B cell (primary cell): ENCODE measurements at regions of chr12 and their contacts with region 1.

Region 1: GRCh38 chr12:89470741-89471509 is 53.7 kb downstream of the GALNT4 start:
- DNase-seq: peak; percentile 70
- ATAC-seq: peak; percentile 61
- H3K4me3 ChIP-seq: no peak overlapping the region
- H3K4me3 Mint-ChIP-seq: no peak overlapping the region
- H3K27ac ChIP-seq: no peak overlapping the region
- H3K27ac Mint-ChIP-seq: peak overlapping the region; percentile 63
- H3K4me1 ChIP-seq: peaks cover 22 to 32% of the 10 kb centered on the region in 2 donors
- H3K4me1 Mint-ChIP-seq: peaks cover 47% of the 10 kb centered on the region
- H3K27me3 ChIP-seq: no peaks in the 10 kb centered on the region
- H3K27me3 Mint-ChIP-seq: no peaks in the 10 kb centered on the region
- CTCF ChIP-seq: peak; percentile 82

Region 2: GRCh38 chr12:89352492-89353187 is 118.3 kb before region 1 on chr12 and contains the start of gene DUSP6:
- CTCF ChIA-PET with region 1: no interaction called
- POLR2A ChIA-PET with region 1: no interaction called
- intact Hi-C with region 1: loop called (anchors 5 kb)
- DNase-seq: peak; percentile 88
- ATAC-seq: peak; percentile 64
- H3K4me3 ChIP-seq: peak within 1 kb of the TSS; percentile 63 to 94 (median 78)
- H3K4me3 Mint-ChIP-seq: peak within 1 kb of the TSS; percentile 97
- H3K27ac ChIP-seq: peak within 1 kb of the TSS; percentile 82 to 87
- H3K27ac Mint-ChIP-seq: peak within 1 kb of the TSS; percentile 96
- H3K4me1 ChIP-seq: peaks cover 44 to 52% of the 10 kb centered on the region in 2 donors
- H3K4me1 Mint-ChIP-seq: peaks cover 68% of the 10 kb centered on the region
- H3K27me3 ChIP-seq: no peaks in the 10 kb centered on the region
- H3K27me3 Mint-ChIP-seq: no peaks in the 10 kb centered on the region
- CTCF ChIP-seq: no peak
- total RNA-seq, gene DUSP6: 1.6 and 3.2 TPM in 2 replicates

Region 3: DNA sequence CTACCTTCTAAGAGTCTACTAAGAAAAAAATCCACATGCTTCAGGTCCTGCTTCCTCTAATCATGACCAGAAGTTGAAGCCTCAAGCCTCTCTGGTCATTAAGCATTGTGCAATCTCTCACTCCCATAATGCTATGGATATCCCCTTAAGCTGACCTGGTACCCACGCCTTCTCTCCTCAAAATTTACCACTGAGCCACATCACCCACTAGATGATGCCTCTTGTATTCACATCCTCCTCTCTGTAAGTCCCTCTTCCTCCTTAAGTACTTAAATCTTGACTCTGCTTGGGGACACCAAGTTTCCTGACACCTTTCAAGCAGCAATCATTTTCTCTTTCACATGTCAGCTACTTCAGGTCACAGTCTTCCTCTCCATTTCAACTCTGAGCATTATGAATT is 43.8 kb after region 1 on chr12:
- CTCF ChIA-PET with region 1: interaction called, 10 read pairs
- POLR2A ChIA-PET with region 1: no interaction called
- intact Hi-C with region 1: no loop called
- DNase-seq: no peak
- ATAC-seq: no peak
- H3K4me3 ChIP-seq: no peak overlapping the region
- H3K4me3 Mint-ChIP-seq: no peak overlapping the region
- H3K27ac ChIP-seq: no peak overlapping the region
- H3K27ac Mint-ChIP-seq: no peak overlapping the region
- H3K4me1 ChIP-seq: peaks cover 12 to 15% of the 10 kb centered on the region in 2 donors
- H3K4me1 Mint-ChIP-seq: peaks cover 17% of the 10 kb centered on the region
- H3K27me3 ChIP-seq: no peaks in the 10 kb centered on the region
- H3K27me3 Mint-ChIP-seq: no peaks in the 10 kb centered on the region
- CTCF ChIP-seq: no peak

Region 4: DNA sequence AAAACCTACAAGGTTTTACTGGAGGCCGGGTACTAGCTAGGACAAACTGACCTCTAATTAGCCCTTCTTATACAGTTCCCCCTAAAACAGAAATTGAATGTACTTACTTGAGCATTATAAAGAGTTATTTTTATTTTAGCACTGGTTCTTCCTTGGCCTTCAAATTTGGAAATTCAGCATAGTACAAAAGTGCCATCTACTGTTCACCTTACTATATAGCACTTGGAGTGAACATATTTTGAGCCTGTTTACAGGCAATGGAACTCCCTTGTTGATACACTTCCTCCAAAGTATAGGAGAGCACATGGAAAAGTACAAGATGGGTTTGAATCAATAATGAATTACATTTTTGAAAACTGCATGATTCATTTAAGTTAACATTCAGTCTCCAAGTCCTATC is 58.8 kb after region 1 on chr12:
- CTCF ChIA-PET with region 1: interaction called, 181 read pairs
- POLR2A ChIA-PET with region 1: no interaction called
- intact Hi-C with region 1: loop called (anchors 1 kb)
- DNase-seq: peak; percentile 67
- ATAC-seq: no peak
- H3K4me3 ChIP-seq: no peak overlapping the region
- H3K4me3 Mint-ChIP-seq: no peak overlapping the region
- H3K27ac ChIP-seq: no peak overlapping the region
- H3K27ac Mint-ChIP-seq: no peak overlapping the region
- H3K4me1 ChIP-seq: peaks cover 6 to 12% of the 10 kb centered on the region in 2 donors
- H3K4me1 Mint-ChIP-seq: peaks cover 27% of the 10 kb centered on the region
- H3K27me3 ChIP-seq: no peaks in the 10 kb centered on the region
- H3K27me3 Mint-ChIP-seq: no peaks in the 10 kb centered on the region
- CTCF ChIP-seq: peak; percentile 81